ENCODE measurements at regions of chr1 and their contacts with region 1.

Region 1: DNA sequence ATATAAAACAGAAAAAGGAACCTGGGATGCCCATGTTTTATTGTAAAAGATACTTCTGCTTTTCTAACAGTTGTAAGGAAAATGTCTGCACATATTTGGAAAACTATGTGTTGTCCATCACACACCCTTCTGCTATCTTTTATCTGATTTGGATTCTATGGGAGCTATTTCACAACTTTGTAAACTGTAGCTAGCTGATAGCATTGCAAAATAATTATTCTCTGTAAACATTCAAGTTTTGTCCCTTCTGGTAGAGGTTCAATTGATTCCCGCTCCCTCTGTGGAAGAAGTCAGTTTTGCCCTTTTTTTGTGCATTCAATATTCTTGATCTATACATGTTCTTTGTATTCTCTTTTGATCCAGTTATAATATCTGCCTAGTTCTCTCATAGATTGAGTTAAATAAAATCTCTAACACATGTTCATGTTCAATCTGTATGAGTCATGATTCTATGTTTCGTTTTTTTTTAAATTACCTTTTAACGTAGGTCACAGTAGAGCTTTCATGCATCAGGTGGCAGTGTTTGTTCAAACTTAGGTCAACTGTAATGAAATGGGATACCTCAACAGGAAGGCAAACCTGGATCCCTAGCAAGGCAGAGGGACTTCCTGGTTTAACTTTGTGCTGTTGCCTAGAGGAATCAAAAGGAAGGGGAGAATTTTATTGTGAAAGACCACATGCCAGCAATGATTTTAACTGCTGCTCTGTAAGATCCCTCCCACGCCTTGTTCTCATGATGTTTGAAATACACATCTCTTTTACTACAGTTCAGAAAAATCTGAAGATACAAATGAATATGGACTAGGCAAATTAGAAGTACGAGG is 26.0 kb upstream of the BCL9 start:
- DNase-seq: no peak
- H3K4me3 Mint-ChIP-seq: no peak overlapping the region
- H3K27ac Mint-ChIP-seq: peak overlapping the region; percentile 9
- H3K4me1 Mint-ChIP-seq: peaks cover 6% of the 10 kb centered on the region
- H3K27me3 Mint-ChIP-seq: peaks cover 9% of the 10 kb centered on the region

Region 2: GRCh38 chr1:147389532-147390524 is 125.4 kb before region 1 on chr1:
- CTCF ChIA-PET with region 1: no interaction called
- POLR2A ChIA-PET with region 1: no interaction called
- DNase-seq: peak; percentile 27
- H3K4me3 Mint-ChIP-seq: no peak overlapping the region
- H3K27ac Mint-ChIP-seq: no peak overlapping the region
- H3K4me1 Mint-ChIP-seq: no peaks in the 10 kb centered on the region
- H3K27me3 Mint-ChIP-seq: peaks cover 16% of the 10 kb centered on the region

Region 3: GRCh38 chr1:147504801-147505311 is 10.4 kb before region 1 on chr1:
- CTCF ChIA-PET with region 1: interaction called, 12 read pairs
- POLR2A ChIA-PET with region 1: no interaction called
- DNase-seq: no peak
- H3K4me3 Mint-ChIP-seq: no peak overlapping the region
- H3K27ac Mint-ChIP-seq: no peak overlapping the region
- H3K4me1 Mint-ChIP-seq: no peaks in the 10 kb centered on the region
- H3K27me3 Mint-ChIP-seq: no peaks in the 10 kb centered on the region

Region 4: GRCh38 chr1:147527941-147528936 is 13.0 kb after region 1 on chr1:
- CTCF ChIA-PET with region 1: interaction called, 10 read pairs
- POLR2A ChIA-PET with region 1: no interaction called
- DNase-seq: peak; percentile 27
- H3K4me3 Mint-ChIP-seq: no peak overlapping the region
- H3K27ac Mint-ChIP-seq: no peak overlapping the region
- H3K4me1 Mint-ChIP-seq: peaks cover 4% of the 10 kb centered on the region
- H3K27me3 Mint-ChIP-seq: no peaks in the 10 kb centered on the region